BJ (cell line): ENCODE measurements at regions of chr18 and their contacts with region 1.

Region 1: GRCh38 chr18:39318008-39318407 is 1752.4 kb upstream of the CELF4 start:
- DNase-seq: no peak
- H3K4me3 ChIP-seq: no peak overlapping the region
- H3K27me3 ChIP-seq: no peaks in the 10 kb centered on the region
- CTCF ChIP-seq: no peak

Region 2: DNA sequence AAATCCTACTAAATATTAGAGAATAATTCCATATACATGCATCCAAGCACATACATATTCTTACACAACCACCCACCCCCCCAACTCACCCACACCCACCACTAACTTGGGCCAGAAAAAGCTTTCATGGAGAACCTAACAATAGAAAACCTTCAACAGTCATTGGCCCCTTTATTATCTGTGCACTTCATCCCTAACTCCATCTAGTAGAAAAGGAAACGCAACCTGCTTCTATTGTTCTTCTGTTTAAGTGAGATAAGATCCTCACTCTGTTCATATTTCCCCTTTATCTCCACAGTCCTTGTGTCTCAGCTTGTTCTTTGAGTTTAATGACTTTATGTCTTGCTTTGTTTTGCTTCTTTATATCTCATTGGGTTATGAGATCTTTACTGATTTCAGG is 12.2 kb before region 1 on chr18:
- CTCF ChIA-PET with region 1: no interaction called
- POLR2A ChIA-PET with region 1: no interaction called
- DNase-seq: no peak
- H3K4me3 ChIP-seq: no peak overlapping the region
- H3K27me3 ChIP-seq: no peaks in the 10 kb centered on the region
- CTCF ChIP-seq: no peak

Region 3: GRCh38 chr18:39329496-39330275 is 11.7 kb after region 1 on chr18:
- CTCF ChIA-PET with region 1: no interaction called
- POLR2A ChIA-PET with region 1: no interaction called
- DNase-seq: no peak
- H3K4me3 ChIP-seq: no peak overlapping the region
- H3K27me3 ChIP-seq: no peaks in the 10 kb centered on the region
- CTCF ChIP-seq: no peak

Region 4: DNA sequence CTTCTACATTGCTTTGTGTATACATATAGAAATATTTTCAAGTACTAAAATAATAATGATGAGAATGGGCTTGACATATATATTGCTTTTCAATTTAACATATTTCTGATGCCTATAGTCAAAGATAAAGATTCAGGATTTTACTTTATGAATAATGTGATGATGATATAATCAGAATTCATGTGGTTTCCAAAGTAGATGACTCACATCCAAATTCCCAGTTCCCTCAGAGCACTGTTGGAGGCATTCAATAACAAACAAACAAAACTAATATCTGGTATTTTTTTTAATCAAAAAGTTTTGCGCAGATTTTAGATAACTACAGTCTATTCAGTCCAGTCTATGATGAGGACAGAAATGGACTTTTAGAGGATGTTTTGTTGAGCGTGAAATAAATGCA is 342.1 kb after region 1 on chr18:
- CTCF ChIA-PET with region 1: no interaction called
- POLR2A ChIA-PET with region 1: interaction called, 13 read pairs
- DNase-seq: no peak
- H3K4me3 ChIP-seq: no peak overlapping the region
- H3K27me3 ChIP-seq: no peaks in the 10 kb centered on the region
- CTCF ChIP-seq: no peak